ENCODE measurements at regions of chr18 and their contacts with region 1.

Region 1: GRCh38 chr18:49858309-49859020 is 45.1 kb upstream of the ACAA2 start:
- DNase-seq: no peak
- H3K4me3 ChIP-seq: no peak overlapping the region
- CTCF ChIP-seq: peak; percentile 81

Region 2: GRCh38 chr18:49500201-49500921 is 358.1 kb before region 1 on chr18:
- CTCF ChIA-PET with region 1: interaction called, 17 read pairs
- POLR2A ChIA-PET with region 1: interaction called, 3 read pairs
- DNase-seq: no peak
- H3K4me3 ChIP-seq: no peak overlapping the region
- CTCF ChIP-seq: no peak

Region 3: GRCh38 chr18:49548229-49548636 is 310.2 kb before region 1 on chr18:
- CTCF ChIA-PET with region 1: interaction called, 23 read pairs
- POLR2A ChIA-PET with region 1: no interaction called
- DNase-seq: no peak
- H3K4me3 ChIP-seq: no peak overlapping the region
- CTCF ChIP-seq: no peak

Region 4: GRCh38 chr18:49768051-49768391 is 90.4 kb before region 1 on chr18:
- CTCF ChIA-PET with region 1: interaction called, 25 read pairs
- POLR2A ChIA-PET with region 1: no interaction called
- DNase-seq: no peak
- H3K4me3 ChIP-seq: no peak overlapping the region
- CTCF ChIP-seq: peak; percentile 79

Region 5: GRCh38 chr18:49819823-49820671 is 38.4 kb before region 1 on chr18:
- CTCF ChIA-PET with region 1: interaction called, 15 read pairs
- POLR2A ChIA-PET with region 1: no interaction called
- DNase-seq: no peak
- H3K4me3 ChIP-seq: no peak overlapping the region
- CTCF ChIP-seq: no peak

Region 6: GRCh38 chr18:50079581-50080295 is 221.3 kb after region 1 on chr18:
- CTCF ChIA-PET with region 1: no interaction called
- POLR2A ChIA-PET with region 1: no interaction called
- DNase-seq: no peak
- H3K4me3 ChIP-seq: no peak overlapping the region
- CTCF ChIP-seq: no peak

Region 7: GRCh38 chr18:50091509-50092244 is 233.2 kb after region 1 on chr18:
- CTCF ChIA-PET with region 1: no interaction called
- POLR2A ChIA-PET with region 1: no interaction called
- DNase-seq: no peak
- H3K4me3 ChIP-seq: no peak overlapping the region
- CTCF ChIP-seq: no peak

Region 8: GRCh38 chr18:50193796-50194630 is 335.5 kb after region 1 on chr18:
- CTCF ChIA-PET with region 1: no interaction called
- POLR2A ChIA-PET with region 1: no interaction called
- DNase-seq: no peak
- H3K4me3 ChIP-seq: no peak overlapping the region
- CTCF ChIP-seq: no peak